K562 (cell line): ENCODE measurements at regions of chr3 and their contacts with region 1.

Region 1: DNA sequence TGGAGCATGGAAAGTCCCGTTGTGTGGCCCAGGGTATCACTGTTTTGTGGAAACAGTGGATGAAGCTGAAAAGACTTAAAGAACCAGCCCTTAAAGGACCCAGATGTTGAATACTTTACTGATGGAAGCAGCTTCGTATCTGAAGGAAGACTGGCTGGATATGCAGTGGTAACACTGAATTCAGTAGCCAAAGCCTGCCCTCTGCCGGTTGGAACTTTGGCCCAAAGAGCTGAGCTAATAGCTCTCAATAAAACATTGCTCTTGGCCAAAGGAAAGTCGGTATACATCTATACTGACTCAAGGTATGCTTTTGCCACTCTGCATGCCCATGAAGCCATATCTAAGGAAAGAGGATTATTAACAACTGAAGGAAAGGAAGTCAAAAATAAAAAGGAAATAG is 885.4 kb downstream of the PDCD6IP start:
- DNase-seq: peak in 3 of 4 experiments; percentile 11 to 75 (median 15)
- ATAC-seq: peak; percentile 79
- H3K4me3 ChIP-seq: no peak overlapping the region
- H3K27ac ChIP-seq: no peak overlapping the region
- H3K4me1 ChIP-seq: no peaks in the 10 kb centered on the region; a peak in 1 of 5 replicates
- H3K27me3 ChIP-seq: no peaks in the 10 kb centered on the region
- CTCF ChIP-seq: peak; percentile 49 to 80 (median 61)
- EP300 ChIP-seq: no peak
- POLR2A ChIP-seq: no peak
- RAD21 ChIP-seq: peak; percentile 94 to 95

Region 2: GRCh38 chr3:34012102-34012461 is 671.8 kb before region 1 on chr3:
- CTCF ChIA-PET with region 1: no interaction called
- POLR2A ChIA-PET with region 1: no interaction called
- in situ Hi-C with region 1: loop called (anchors 25 kb)
- intact Hi-C with region 1: loop called (anchors 10 kb)
- DNase-seq: peak; percentile 31 to 44 (median 34)
- ATAC-seq: no peak
- H3K4me3 ChIP-seq: no peak overlapping the region
- H3K27ac ChIP-seq: no peak overlapping the region
- H3K4me1 ChIP-seq: peaks cover 3 to 9% of the 10 kb centered on the region in 2 experiments
- H3K27me3 ChIP-seq: no peaks in the 10 kb centered on the region
- CTCF ChIP-seq: no peak
- EP300 ChIP-seq: no peak
- POLR2A ChIP-seq: no peak
- RAD21 ChIP-seq: no peak

Region 3: DNA sequence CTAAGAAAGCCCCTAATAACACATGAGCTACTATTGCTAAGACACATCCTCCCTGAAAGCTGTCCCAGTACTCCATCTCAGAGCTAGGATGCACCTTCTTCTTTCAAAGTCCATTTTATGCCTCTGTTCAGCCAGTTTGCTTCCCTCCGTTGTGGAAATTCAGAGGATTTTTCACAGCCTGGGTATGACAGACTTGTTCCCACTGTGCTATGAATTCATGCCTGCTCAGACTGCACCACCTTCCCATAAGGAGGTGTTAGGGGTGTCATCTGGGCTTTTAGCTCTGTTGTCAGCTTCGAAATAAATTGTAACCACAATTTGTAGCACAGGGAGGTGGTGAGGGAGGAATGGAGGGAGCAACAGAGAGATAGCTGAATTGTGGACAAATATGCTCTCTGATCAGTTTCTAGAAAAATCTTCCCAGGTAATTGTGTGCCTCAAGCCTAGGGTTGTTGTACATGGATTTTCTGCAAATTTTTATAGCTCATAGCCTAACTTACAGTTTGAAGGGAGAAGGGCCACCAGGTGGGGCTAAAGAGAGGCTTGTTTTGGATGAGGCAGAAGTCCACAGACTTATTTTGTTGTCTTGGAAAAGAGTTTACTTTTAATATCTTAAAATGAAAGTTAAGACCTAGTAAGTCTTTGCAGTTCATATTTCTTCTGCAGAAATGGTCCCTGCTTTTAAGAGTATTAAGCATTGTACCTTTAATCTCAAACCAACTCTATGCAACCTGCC is 423.4 kb before region 1 on chr3:
- CTCF ChIA-PET with region 1: no interaction called
- POLR2A ChIA-PET with region 1: interaction called, 6 read pairs
- in situ Hi-C with region 1: loop called (anchors 10 kb)
- intact Hi-C with region 1: loop called (anchors 2 kb)
- DNase-seq: peak; percentile 45 to 60 (median 54)
- ATAC-seq: peak; percentile 89
- H3K4me3 ChIP-seq: no peak overlapping the region
- H3K27ac ChIP-seq: no peak overlapping the region
- H3K4me1 ChIP-seq: no peaks in the 10 kb centered on the region
- H3K27me3 ChIP-seq: no peaks in the 10 kb centered on the region
- CTCF ChIP-seq: peak; percentile 39 to 69 (median 62)
- EP300 ChIP-seq: no peak
- POLR2A ChIP-seq: no peak
- RAD21 ChIP-seq: peak; percentile 61 to 68

Region 4: DNA sequence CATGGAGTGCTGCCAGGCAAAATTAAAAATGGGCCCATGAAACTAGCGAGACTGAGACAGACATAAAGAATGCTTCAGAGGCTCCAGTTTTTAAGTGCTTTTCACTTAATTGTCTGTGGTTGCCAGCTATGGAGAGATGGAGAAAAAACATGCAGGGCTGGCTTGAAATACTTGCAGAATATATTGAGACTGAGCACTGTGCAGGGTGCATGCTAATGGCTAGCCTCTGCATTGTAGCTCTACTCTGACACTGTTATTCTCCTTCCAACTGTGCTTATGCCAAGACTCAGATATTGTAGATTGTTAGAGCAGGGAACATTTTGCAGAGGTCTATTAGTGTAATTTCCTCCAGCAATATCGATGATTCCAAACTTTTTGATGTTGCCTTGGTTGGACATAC is 150.4 kb before region 1 on chr3:
- CTCF ChIA-PET with region 1: no interaction called
- POLR2A ChIA-PET with region 1: no interaction called
- in situ Hi-C with region 1: no loop called
- intact Hi-C with region 1: loop called (anchors 1 kb)
- DNase-seq: no peak
- ATAC-seq: no peak
- H3K4me3 ChIP-seq: no peak overlapping the region
- H3K27ac ChIP-seq: no peak overlapping the region
- H3K4me1 ChIP-seq: no peaks in the 10 kb centered on the region
- H3K27me3 ChIP-seq: no peaks in the 10 kb centered on the region
- CTCF ChIP-seq: no peak
- EP300 ChIP-seq: no peak
- POLR2A ChIP-seq: no peak
- RAD21 ChIP-seq: no peak

Region 5: DNA sequence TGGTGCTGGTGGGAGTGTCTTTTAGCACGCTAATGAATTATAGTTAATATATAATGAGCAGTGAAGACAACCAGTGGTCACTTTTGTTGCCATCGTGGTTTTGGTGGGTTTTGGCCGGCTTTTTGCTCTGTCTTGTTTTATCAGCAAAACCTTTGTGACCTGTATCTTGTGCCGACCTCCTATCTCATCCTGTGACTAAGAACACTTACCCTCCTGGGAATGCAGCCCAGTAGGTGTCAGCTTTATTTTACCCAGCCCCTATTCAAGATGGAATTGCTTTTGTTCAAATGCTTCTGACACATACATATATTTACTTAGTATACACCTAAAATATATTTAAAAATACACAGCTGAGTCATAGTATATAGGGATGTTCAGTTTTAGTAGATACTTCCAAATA is 115.1 kb before region 1 on chr3:
- CTCF ChIA-PET with region 1: no interaction called
- POLR2A ChIA-PET with region 1: no interaction called
- in situ Hi-C with region 1: no loop called
- intact Hi-C with region 1: no loop called
- DNase-seq: no peak
- ATAC-seq: no peak
- H3K4me3 ChIP-seq: no peak overlapping the region
- H3K27ac ChIP-seq: no peak overlapping the region
- H3K4me1 ChIP-seq: no peaks in the 10 kb centered on the region
- H3K27me3 ChIP-seq: no peaks in the 10 kb centered on the region
- CTCF ChIP-seq: no peak
- EP300 ChIP-seq: no peak
- POLR2A ChIP-seq: no peak
- RAD21 ChIP-seq: no peak

Region 6: GRCh38 chr3:34619990-34620389 is 63.9 kb before region 1 on chr3:
- CTCF ChIA-PET with region 1: no interaction called
- POLR2A ChIA-PET with region 1: no interaction called
- in situ Hi-C with region 1: no loop called
- intact Hi-C with region 1: loop called (anchors 2 kb)
- DNase-seq: no peak
- ATAC-seq: no peak
- H3K4me3 ChIP-seq: no peak overlapping the region
- H3K27ac ChIP-seq: no peak overlapping the region
- H3K4me1 ChIP-seq: no peaks in the 10 kb centered on the region
- H3K27me3 ChIP-seq: no peaks in the 10 kb centered on the region
- CTCF ChIP-seq: no peak
- EP300 ChIP-seq: no peak
- POLR2A ChIP-seq: no peak
- RAD21 ChIP-seq: peak in 1 of 2 experiments; percentile 33; a peak in 2 of 4 replicates

Region 7: DNA sequence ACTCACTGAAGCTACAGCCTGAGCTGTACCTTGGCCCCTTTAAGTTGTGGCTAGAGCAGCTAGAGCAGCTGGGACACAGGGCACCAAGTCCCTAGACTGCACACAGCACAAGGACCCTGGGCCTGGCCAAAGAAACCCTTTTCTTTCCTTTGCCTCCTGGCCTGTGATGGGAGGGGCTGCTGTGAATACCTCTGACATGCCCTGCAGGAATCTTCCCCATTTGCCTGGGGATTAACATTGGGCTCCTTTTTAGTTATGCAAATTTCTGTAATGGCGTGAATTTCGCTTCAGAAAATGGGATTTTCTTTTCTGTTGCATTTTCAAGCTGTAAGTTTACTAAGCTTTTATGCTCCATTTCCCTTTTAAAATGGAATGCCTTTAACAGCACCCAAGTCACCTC is 344.3 kb after region 1 on chr3:
- CTCF ChIA-PET with region 1: no interaction called
- POLR2A ChIA-PET with region 1: no interaction called
- in situ Hi-C with region 1: no loop called
- intact Hi-C with region 1: no loop called
- DNase-seq: no peak
- ATAC-seq: no peak
- H3K4me3 ChIP-seq: no peak overlapping the region
- H3K27ac ChIP-seq: no peak overlapping the region
- H3K4me1 ChIP-seq: no peaks in the 10 kb centered on the region
- H3K27me3 ChIP-seq: no peaks in the 10 kb centered on the region
- CTCF ChIP-seq: no peak
- EP300 ChIP-seq: no peak
- POLR2A ChIP-seq: no peak
- RAD21 ChIP-seq: no peak